ENCODE measurements at regions of chr1 and their contacts with region 1.

Region 1: DNA sequence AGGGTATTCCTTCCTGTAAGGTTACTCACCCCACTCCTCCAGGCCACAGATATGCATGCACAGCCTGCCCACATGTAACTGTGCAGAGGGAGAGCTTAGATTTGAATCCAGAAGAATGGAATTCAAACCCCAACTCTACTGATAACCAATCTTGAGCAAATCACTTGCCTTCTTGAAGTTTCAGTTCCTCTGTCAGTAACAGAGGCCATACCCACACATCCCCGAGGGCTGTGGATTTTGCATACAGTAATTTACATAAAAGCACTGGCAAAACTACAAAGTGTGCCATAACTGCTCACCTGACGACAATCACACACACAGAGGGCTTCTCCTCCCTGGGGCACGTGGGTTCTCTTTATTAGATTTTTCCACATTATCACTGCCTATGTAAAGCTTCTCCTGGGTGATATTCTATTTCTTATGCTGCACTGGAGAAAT is 18.6 kb downstream of the CD247 start:
- DNase-seq: no peak
- H3K4me3 Mint-ChIP-seq: peak overlapping the region; percentile 6
- H3K27ac Mint-ChIP-seq: peak overlapping the region; percentile 96
- H3K4me1 Mint-ChIP-seq: peaks cover 91% of the 10 kb centered on the region
- H3K27me3 Mint-ChIP-seq: no peaks in the 10 kb centered on the region

Region 2: GRCh38 chr1:167447521-167448136 is 52.1 kb before region 1 on chr1:
- intact Hi-C with region 1: loop called (anchors 1 kb)
- DNase-seq: peak; percentile 69
- H3K4me3 Mint-ChIP-seq: peak overlapping the region; percentile 65
- H3K27ac Mint-ChIP-seq: peak overlapping the region; percentile 94
- H3K4me1 Mint-ChIP-seq: peaks cover 64% of the 10 kb centered on the region
- H3K27me3 Mint-ChIP-seq: no peaks in the 10 kb centered on the region

Region 3: GRCh38 chr1:167454894-167455785 is 44.5 kb before region 1 on chr1:
- intact Hi-C with region 1: loop called (anchors 1 kb)
- DNase-seq: peak; percentile 77
- H3K4me3 Mint-ChIP-seq: peak overlapping the region; percentile 77
- H3K27ac Mint-ChIP-seq: peak overlapping the region; percentile 51
- H3K4me1 Mint-ChIP-seq: peaks cover 50% of the 10 kb centered on the region
- H3K27me3 Mint-ChIP-seq: no peaks in the 10 kb centered on the region

Region 4: GRCh38 chr1:167474191-167474716 is 25.4 kb before region 1 on chr1:
- intact Hi-C with region 1: loop called (anchors 1 kb)
- DNase-seq: no peak
- H3K4me3 Mint-ChIP-seq: peak overlapping the region; percentile 43
- H3K27ac Mint-ChIP-seq: peak overlapping the region; percentile 79
- H3K4me1 Mint-ChIP-seq: peaks cover 64% of the 10 kb centered on the region
- H3K27me3 Mint-ChIP-seq: no peaks in the 10 kb centered on the region

Region 5: GRCh38 chr1:167482184-167482583 is 17.5 kb before region 1 on chr1:
- intact Hi-C with region 1: loop called (anchors 2 kb)
- DNase-seq: no peak
- H3K4me3 Mint-ChIP-seq: peak overlapping the region; percentile 56
- H3K27ac Mint-ChIP-seq: peak overlapping the region; percentile 79
- H3K4me1 Mint-ChIP-seq: peaks cover 77% of the 10 kb centered on the region
- H3K27me3 Mint-ChIP-seq: no peaks in the 10 kb centered on the region

Region 6: GRCh38 chr1:167533851-167534300 is 34.2 kb after region 1 on chr1:
- intact Hi-C with region 1: no loop called
- DNase-seq: peak; percentile 47
- H3K4me3 Mint-ChIP-seq: no peak overlapping the region
- H3K27ac Mint-ChIP-seq: no peak overlapping the region
- H3K4me1 Mint-ChIP-seq: peaks cover 4% of the 10 kb centered on the region
- H3K27me3 Mint-ChIP-seq: peaks cover 3% of the 10 kb centered on the region

Region 7: GRCh38 chr1:167578939-167579521 is 79.3 kb after region 1 on chr1:
- intact Hi-C with region 1: no loop called
- DNase-seq: no peak
- H3K4me3 Mint-ChIP-seq: no peak overlapping the region
- H3K27ac Mint-ChIP-seq: no peak overlapping the region
- H3K4me1 Mint-ChIP-seq: no peaks in the 10 kb centered on the region
- H3K27me3 Mint-ChIP-seq: peaks cover 17% of the 10 kb centered on the region

Region 8: GRCh38 chr1:167627865-167628641 is 128.4 kb after region 1 on chr1:
- intact Hi-C with region 1: loop called (anchors 5 kb)
- DNase-seq: peak; percentile 84
- H3K4me3 Mint-ChIP-seq: peak overlapping the region; percentile 96
- H3K27ac Mint-ChIP-seq: peak overlapping the region; percentile 95
- H3K4me1 Mint-ChIP-seq: peaks cover 55% of the 10 kb centered on the region
- H3K27me3 Mint-ChIP-seq: no peaks in the 10 kb centered on the region